Activated T-helper 1 cell treated with anti-CD3 and anti-CD28 coated beads, Interleukin-12 subunit alpha, Interleukin-12 subunit beta, Interleukin-2, Interleukin-4 antibody, amounts not matched to agents 30 ng/mL and 10 ng/mL and 1 ng/mL, durations not matched to agents 14 hours and 24 hours and 36 hours (primary cell): ENCODE measurements at regions of chr2 and their contacts with region 1.

Region 1: GRCh38 chr2:98761267-98761781 is 30.4 kb upstream of the MGAT4A start:
- DNase-seq: peak; percentile 46
- H3K4me3 Mint-ChIP-seq: peak overlapping the region; percentile 62
- H3K27ac Mint-ChIP-seq: peak overlapping the region; percentile 90
- H3K4me1 Mint-ChIP-seq: peaks cover 81% of the 10 kb centered on the region
- H3K27me3 Mint-ChIP-seq: no peaks in the 10 kb centered on the region

Region 2: DNA sequence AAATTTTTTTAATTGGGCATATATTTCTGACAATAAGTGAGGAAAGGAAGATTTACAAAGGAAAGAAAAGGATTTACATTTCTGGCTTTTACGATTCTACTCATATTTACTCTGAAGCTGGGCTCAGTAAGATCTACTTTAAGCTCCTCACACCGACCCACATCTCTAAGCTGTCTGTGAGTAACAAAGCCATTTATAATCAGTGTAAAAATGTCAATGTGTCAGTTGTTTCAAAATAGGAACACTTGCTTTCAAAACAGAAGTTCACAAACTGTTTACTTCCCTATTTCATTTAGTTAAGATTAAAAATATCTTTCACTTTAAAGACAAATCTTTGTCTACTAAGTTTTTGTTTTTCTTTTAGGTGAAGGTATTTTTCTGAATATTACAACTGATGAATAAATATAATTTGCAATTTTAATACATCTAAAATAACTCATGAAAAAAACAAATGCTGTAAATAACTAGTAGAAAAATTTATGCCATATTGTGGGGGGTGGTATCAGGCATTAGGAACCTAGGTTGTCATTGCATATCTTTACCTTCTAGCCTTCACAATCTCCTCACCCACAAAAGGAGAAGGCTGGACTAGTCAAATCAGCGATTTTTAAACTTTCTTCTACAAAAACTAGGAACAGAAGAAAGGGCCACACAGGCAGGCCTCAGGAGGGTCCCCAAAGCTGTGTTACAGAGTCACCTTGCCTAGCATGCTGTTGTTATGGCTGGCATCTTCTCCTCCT is 830.0 kb before region 1 on chr2:
- intact Hi-C with region 1: no loop called
- DNase-seq: no peak
- H3K4me3 Mint-ChIP-seq: no peak overlapping the region
- H3K27ac Mint-ChIP-seq: no peak overlapping the region
- H3K4me1 Mint-ChIP-seq: peaks cover 13% of the 10 kb centered on the region
- H3K27me3 Mint-ChIP-seq: no peaks in the 10 kb centered on the region

Region 3: GRCh38 chr2:98664327-98664726 is 97.0 kb before region 1 on chr2:
- intact Hi-C with region 1: loop called (anchors 1 kb)
- DNase-seq: peak; percentile 56
- H3K4me3 Mint-ChIP-seq: peak overlapping the region; percentile 63
- H3K27ac Mint-ChIP-seq: peak overlapping the region; percentile 99
- H3K4me1 Mint-ChIP-seq: peaks cover 79% of the 10 kb centered on the region
- H3K27me3 Mint-ChIP-seq: no peaks in the 10 kb centered on the region